CD4-positive, alpha-beta T cell (primary cell): ENCODE measurements at regions of chr1 and their contacts with region 1.

Region 1: DNA sequence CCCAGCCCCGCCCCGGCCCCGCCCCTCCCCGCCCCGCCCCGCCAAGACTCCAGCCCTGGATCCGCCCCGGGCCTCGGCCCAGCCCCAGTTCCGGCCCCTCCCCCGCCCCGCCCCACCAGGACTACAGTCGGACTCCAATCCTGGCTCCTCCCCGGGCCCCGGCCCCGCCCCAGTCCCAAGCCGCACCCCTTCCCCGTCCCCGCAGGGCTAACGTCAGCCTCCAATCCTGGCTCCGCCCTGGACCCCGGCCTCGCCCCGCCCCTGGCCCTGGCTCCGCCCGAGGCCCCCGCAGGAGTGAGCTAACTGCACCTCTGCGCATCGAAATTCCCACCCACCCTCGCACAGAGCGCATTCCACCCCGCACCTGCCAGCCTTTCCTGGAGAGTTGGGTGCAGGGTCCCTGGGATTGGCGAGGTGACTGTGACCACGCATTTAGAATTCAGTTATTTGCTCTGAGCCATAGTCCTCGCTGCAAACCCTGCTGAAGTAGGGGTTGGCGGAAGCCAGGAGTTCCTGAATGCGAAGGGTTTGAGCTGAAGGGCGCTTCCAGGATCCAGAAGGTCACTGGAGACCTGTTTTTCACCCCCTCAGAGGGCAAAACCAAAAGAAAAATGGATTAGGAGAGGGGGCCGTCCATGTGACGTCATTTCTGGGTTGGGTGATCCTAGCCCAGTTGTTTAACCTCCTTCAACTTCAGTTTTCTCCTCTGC is 588 bp upstream of the IGSF8 start:
- DNase-seq: peak; percentile 97 to 100 (median 99)
- ATAC-seq: peak; percentile 87
- H3K4me3 ChIP-seq: peak overlapping the region; percentile 61
- H3K4me3 Mint-ChIP-seq: peak overlapping the region; percentile 87
- H3K27ac ChIP-seq: peak overlapping the region; percentile 93
- H3K27ac Mint-ChIP-seq: peak overlapping the region; percentile 88
- H3K4me1 ChIP-seq: peaks cover 66% of the 10 kb centered on the region
- H3K4me1 Mint-ChIP-seq: peaks cover 74% of the 10 kb centered on the region
- H3K27me3 ChIP-seq: no peaks in the 10 kb centered on the region
- H3K27me3 Mint-ChIP-seq: no peaks in the 10 kb centered on the region
- CTCF ChIP-seq: no peak

Region 2: DNA sequence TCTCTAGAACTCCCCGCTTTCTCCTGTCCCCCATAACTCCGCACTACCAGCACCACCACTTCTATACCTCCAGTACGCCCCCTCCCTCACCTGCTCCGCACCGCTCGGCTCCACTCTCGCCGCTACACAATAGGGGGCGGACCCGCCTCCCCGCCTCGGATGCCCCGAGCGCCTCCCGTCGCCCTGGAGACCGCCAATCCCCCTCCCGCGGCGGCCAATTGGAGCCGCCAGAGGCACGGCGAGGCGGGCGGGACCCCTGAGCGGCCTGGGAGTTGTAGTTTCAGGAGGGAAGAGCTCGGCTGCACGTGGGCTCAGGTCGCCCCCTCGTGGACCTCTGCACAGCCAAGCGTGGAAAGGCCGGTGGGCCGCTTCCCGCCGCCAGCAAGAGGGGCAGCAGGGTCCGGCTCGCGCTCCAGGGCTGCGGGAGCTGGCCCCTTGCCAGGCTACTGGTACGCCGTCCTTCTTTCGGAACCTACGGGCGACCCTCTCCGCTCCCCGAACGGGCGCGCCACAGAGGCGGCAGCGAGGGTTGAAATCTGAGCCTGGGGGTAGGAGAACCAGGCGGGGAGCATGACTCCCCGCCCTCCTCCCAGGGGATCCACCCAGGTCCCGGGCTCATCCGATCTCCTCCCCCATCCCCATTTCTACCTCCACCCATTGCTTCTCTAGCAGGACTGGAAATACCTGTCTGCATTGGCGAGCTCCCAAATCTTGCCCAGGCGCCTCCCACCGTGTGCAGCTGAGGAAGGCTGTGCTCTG is 153.3 kb before region 1 on chr1 and contains the start of gene IGSF9:
- CTCF ChIA-PET with region 1: no interaction called
- POLR2A ChIA-PET with region 1: no interaction called
- intact Hi-C with region 1: no loop called
- DNase-seq: peak; percentile 53 to 89 (median 72)
- ATAC-seq: peak; percentile 97
- H3K4me3 ChIP-seq: peak within 1 kb of the TSS; percentile 46
- H3K4me3 Mint-ChIP-seq: peak within 1 kb of the TSS; percentile 62
- H3K27ac ChIP-seq: no peak within 1 kb of the TSS
- H3K27ac Mint-ChIP-seq: no peak within 1 kb of the TSS
- H3K4me1 ChIP-seq: peaks cover 15% of the 10 kb centered on the region
- H3K4me1 Mint-ChIP-seq: peaks cover 10% of the 10 kb centered on the region
- H3K27me3 ChIP-seq: peaks cover 22 to 26% of the 10 kb centered on the region in 2 experiments
- H3K27me3 Mint-ChIP-seq: peaks cover 42% of the 10 kb centered on the region
- CTCF ChIP-seq: peak; percentile 63
- total RNA-seq, gene IGSF9: not detected

Region 3: DNA sequence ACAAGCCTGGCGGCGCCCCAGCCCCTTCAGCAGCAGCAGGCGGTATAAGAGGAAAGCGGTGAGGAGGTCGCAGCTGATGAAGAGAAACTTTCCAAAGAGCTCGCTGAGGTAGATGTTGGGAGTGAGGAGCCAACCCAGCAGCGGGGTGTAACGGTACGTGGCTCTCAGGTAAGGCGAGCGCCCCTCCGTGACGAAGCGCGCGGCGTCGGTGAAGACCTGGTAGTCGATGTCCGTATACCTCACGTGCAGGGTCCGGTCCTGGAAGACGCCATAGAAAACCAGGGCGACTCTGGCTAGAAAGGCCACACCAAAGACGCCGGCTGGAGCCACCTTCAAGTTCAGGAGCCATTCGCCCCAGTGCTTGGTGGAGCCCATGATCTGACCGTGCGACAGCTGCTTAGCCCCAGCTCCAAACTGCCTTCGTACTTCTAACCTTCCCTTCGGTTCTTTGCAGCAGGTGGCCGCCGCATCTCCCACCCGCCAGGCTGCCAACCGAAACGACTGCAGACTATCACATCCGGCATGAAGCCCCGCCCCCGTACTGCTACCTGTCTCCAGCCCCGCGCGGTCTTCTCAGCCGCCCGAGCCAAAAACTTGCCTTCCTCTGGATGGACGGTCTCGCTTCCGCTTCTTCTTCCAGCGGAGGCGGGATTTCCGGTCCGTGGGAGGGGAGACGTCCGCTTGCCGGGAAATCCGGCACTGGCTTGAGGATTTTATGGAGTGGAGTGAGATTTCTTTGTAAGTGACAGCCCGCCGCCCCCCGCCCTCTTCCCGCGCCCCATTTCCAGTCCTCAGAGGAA is 67.4 kb before region 1 on chr1 and contains the start of gene PIGM:
- CTCF ChIA-PET with region 1: interaction called, 3 read pairs
- POLR2A ChIA-PET with region 1: interaction called, 15 read pairs
- intact Hi-C with region 1: loop called in 1 of 2 experiments (anchors 5 kb)
- DNase-seq: peak; percentile 82 to 98 (median 92)
- ATAC-seq: peak; percentile 98
- H3K4me3 ChIP-seq: peak within 1 kb of the TSS; percentile 89
- H3K4me3 Mint-ChIP-seq: peak within 1 kb of the TSS; percentile 98
- H3K27ac ChIP-seq: peak within 1 kb of the TSS; percentile 52 to 67
- H3K27ac Mint-ChIP-seq: peak within 1 kb of the TSS; percentile 94
- H3K4me1 ChIP-seq: peaks cover 24% of the 10 kb centered on the region
- H3K4me1 Mint-ChIP-seq: peaks cover 50% of the 10 kb centered on the region
- H3K27me3 ChIP-seq: no peaks in the 10 kb centered on the region
- H3K27me3 Mint-ChIP-seq: no peaks in the 10 kb centered on the region
- CTCF ChIP-seq: no peak
- total RNA-seq, gene PIGM: 2.1 to 2.2 TPM

Region 4: DNA sequence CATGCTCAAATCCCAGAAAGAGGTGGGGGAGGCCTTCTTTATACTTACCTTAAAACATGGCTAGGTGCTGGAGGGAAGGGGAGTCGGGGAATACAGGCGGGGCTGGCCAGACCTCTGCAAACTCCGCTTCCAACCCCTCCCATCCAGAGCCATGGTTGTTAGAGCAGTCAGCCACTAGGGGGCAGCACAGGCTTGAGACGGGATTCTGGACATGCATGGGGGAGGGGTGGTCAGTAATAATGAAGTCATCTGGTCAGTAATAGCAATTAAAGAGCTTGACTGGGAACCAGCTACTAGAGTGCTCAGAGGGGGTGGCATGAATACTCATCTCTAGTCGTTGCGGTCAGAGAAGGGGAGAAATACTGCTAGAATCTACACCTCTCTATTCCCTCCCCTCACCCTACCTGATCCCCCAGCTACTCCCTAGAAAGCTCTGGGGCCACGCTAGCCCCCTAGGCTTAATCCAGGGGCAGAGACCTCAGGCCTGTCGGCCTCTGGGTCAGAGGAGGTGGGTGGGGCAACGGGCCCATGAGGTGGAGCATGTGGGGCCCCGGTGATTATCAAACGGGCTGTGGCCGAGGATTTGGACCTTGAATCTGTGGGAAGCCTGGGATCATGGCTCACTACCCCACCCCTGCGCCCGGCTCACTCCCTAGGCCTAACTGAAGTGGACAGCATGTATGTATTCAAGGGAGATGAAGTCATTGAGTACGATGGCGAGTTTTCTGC is 94.2 kb after region 1 on chr1:
- CTCF ChIA-PET with region 1: interaction called, 5 read pairs
- POLR2A ChIA-PET with region 1: no interaction called
- intact Hi-C with region 1: loop called in 1 of 2 experiments (anchors 5 kb)
- DNase-seq: peak; percentile 62 to 88 (median 78)
- ATAC-seq: peak; percentile 95
- H3K4me3 ChIP-seq: no peak overlapping the region
- H3K4me3 Mint-ChIP-seq: no peak overlapping the region
- H3K27ac ChIP-seq: no peak overlapping the region
- H3K27ac Mint-ChIP-seq: no peak overlapping the region
- H3K4me1 ChIP-seq: peaks cover 7% of the 10 kb centered on the region
- H3K4me1 Mint-ChIP-seq: no peaks in the 10 kb centered on the region
- H3K27me3 ChIP-seq: no peaks in the 10 kb centered on the region
- H3K27me3 Mint-ChIP-seq: no peaks in the 10 kb centered on the region
- CTCF ChIP-seq: peak; percentile 89

Region 5: GRCh38 chr1:160261893-160262794 is 163.1 kb after region 1 on chr1 and contains the start of gene DCAF8:
- CTCF ChIA-PET with region 1: interaction called, 7 read pairs
- POLR2A ChIA-PET with region 1: interaction called, 21 read pairs
- intact Hi-C with region 1: loop called in 1 of 2 experiments (anchors 1 kb)
- DNase-seq: peak; percentile 96 to 99 (median 98)
- ATAC-seq: peak; percentile 86
- H3K4me3 ChIP-seq: peak within 1 kb of the TSS; percentile 83
- H3K4me3 Mint-ChIP-seq: peak within 1 kb of the TSS; percentile 96
- H3K27ac ChIP-seq: peak within 1 kb of the TSS; percentile 98 to 99
- H3K27ac Mint-ChIP-seq: peak within 1 kb of the TSS; percentile 97
- H3K4me1 ChIP-seq: peaks cover 33% of the 10 kb centered on the region
- H3K4me1 Mint-ChIP-seq: peaks cover 55% of the 10 kb centered on the region
- H3K27me3 ChIP-seq: no peaks in the 10 kb centered on the region
- H3K27me3 Mint-ChIP-seq: no peaks in the 10 kb centered on the region
- CTCF ChIP-seq: no peak
- total RNA-seq, gene DCAF8: 151 to 154 TPM

Region 6: DNA sequence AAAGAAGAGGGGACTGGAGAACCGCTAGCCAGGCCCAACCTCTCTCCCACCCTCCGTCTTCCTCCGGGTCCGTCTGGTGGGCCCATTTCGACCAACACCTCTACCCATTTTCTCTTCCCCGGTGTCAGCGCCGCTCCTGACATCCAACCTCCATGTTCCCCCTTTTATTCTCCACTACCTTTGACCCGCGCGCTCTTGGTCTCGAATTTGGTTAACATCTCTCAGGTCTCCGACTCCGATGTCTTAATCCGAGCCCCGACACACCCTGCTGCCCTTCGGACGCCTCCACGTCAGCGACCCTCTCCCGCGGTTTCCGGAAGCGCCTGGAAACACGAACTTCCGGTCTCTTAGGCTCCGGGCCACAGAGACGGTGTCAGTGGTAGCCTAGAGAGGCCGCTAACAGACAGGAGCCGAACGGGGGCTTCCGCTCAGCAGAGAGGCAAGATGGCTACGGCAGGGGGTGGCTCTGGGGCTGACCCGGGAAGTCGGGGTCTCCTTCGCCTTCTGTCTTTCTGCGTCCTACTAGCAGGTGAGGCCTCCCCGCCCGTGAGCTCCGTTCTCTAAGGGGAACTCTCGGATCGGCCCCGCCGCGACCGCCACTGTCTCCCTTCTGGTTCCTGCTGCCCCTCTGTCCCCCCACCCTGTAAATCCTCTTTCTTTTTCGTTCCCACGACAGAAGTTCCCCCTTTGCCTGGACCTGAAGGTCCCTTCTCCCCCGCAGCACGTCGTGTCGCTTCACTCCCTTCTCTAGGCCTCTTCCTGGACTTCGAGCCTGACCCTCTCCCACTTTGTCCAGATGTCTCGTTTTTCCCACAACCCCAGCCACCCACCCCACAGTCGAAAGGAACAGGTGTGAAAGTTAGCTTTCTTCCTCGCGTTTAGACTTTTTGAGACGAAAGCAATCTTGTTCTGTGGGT is 244.2 kb after region 1 on chr1 and contains the starts of genes COPA and NCSTN:
- CTCF ChIA-PET with region 1: no interaction called
- POLR2A ChIA-PET with region 1: interaction called, 6 read pairs
- intact Hi-C with region 1: loop called in 1 of 2 experiments (anchors 5 kb)
- DNase-seq: peak; percentile 79 to 96 (median 84)
- ATAC-seq: peak; percentile 98
- H3K4me3 ChIP-seq: peak within 1 kb of the TSS; percentile 96
- H3K4me3 Mint-ChIP-seq: peak within 1 kb of the TSS; percentile 100
- H3K27ac ChIP-seq: peak within 1 kb of the TSS; percentile 88 to 94
- H3K27ac Mint-ChIP-seq: peak within 1 kb of the TSS; percentile 97
- H3K4me1 ChIP-seq: peaks cover 18% of the 10 kb centered on the region
- H3K4me1 Mint-ChIP-seq: peaks cover 69% of the 10 kb centered on the region
- H3K27me3 ChIP-seq: no peaks in the 10 kb centered on the region
- H3K27me3 Mint-ChIP-seq: no peaks in the 10 kb centered on the region
- CTCF ChIP-seq: no peak
- total RNA-seq, gene COPA: 95.0 to 107 TPM
- total RNA-seq, gene NCSTN: 54.9 to 56.6 TPM